Right cardiac atrium (tissue), 5 donors: ENCODE measurements at regions of chr1 and their contacts with region 1.

Region 1: DNA sequence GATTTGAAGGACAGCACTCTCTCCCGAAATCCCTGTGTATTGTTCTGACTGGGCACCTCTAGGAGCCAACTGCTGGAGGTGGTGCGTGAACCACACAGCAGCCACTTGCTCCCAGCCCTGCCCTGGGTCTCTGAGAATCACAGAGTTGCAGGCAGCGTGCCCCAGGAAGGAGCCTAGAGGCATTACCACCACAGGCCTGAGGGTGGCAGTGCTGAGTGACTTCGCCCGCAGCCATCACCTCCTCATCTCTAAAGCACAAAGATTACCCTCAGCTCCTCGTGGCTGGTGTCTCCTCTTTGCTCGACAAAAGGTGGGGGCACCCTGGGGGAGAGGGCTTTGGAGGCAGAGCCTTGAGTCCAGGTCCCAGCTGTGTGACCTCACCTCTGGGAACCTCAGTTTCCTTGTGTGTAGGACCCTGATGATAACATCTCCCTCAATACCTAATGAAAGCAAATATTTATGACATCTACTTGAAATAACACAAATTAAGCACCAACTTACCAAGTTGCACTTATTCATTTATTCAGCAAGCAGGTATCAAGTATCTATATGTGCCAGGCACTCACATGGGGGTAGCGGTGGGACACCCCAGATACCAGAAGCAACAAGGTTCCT is 86.3 kb downstream of the VWA5B1 start:
- DNase-seq: peak in 1 of 3 donors; percentile 70
- ATAC-seq: peak in 1 of 2 donors; percentile 66
- H3K4me3 ChIP-seq: no peak overlapping the region
- H3K27ac ChIP-seq: no peak overlapping the region
- H3K4me1 ChIP-seq: no peaks in the 10 kb centered on the region
- H3K27me3 ChIP-seq: no peaks in the 10 kb centered on the region

Region 2: GRCh38 chr1:20199403-20199802 is 177.6 kb before region 1 on chr1:
- intact Hi-C with region 1: no loop called
- DNase-seq: no peak
- ATAC-seq: no peak
- H3K4me3 ChIP-seq: no peak overlapping the region
- H3K27ac ChIP-seq: no peak overlapping the region
- H3K4me1 ChIP-seq: peaks cover 4% of the 10 kb centered on the region
- H3K27me3 ChIP-seq: no peaks in the 10 kb centered on the region

Region 3: DNA sequence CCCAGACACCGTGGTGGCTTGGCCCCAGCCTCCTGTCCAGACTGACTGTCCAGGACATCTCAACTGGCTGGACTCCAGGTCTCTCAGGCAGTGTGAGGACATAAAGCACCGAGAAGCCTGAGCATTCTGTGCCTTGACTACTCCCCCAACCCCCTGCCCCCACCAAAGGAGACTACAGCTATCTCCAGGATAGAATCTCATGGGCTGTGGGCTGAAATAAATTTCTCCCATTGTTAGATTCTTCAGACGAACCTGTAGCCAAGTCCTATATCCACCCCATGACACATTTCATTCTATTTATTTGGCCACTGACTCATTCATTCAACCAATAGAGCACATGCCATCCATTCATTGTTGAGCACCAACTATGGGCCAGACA is 74.9 kb before region 1 on chr1:
- intact Hi-C with region 1: no loop called
- DNase-seq: peak; percentile 56 to 84 (median 81)
- ATAC-seq: peak; percentile 79 to 87
- H3K4me3 ChIP-seq: no peak overlapping the region
- H3K27ac ChIP-seq: no peak overlapping the region
- H3K4me1 ChIP-seq: peaks cover 2% of the 10 kb centered on the region
- H3K27me3 ChIP-seq: no peaks in the 10 kb centered on the region

Region 4: DNA sequence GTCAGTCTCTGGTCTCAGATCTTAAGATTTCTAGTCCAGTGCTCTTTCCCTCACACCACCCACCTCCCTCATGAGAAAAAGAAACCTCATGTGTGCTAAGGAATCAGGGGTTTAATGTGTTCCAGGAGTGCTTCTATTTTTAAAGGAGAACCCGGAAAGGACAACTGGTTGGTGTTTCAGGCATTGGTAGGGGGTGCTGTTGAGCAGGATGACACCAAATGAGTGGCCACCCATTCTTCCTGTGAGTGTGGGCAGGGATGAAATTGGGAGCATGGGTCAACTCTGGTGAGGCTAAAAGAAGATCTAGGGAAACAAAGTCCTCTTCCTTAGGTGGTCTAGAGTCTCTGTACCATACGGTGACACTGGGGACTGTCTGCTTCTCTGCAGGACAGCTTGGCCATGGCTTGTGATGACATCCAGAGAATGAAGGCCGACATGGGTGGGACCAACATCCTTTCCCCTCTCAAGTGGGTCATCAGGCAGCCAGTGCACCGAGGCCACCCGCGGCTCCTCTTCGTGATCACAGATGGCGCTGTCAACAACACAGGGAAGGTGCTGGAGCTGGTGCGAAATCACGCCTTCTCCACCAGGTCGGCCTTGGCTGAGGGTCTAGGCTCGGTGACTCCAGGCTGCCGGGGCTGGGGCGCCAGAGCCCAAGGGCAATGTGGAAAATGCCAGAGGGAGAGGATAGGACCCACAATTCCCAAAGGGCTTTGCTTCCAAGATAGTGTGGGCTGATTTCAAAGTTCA is 47.0 kb before region 1 on chr1:
- intact Hi-C with region 1: no loop called
- DNase-seq: peak in 1 of 3 donors; percentile 20
- ATAC-seq: no peak
- H3K4me3 ChIP-seq: no peak overlapping the region
- H3K27ac ChIP-seq: no peak overlapping the region
- H3K4me1 ChIP-seq: no peaks in the 10 kb centered on the region
- H3K27me3 ChIP-seq: no peaks in the 10 kb centered on the region

Region 5: GRCh38 chr1:20485527-20486456 is 108.8 kb after region 1 on chr1 and contains the start of gene CAMK2N1:
- intact Hi-C with region 1: loop called in 3 of 4 experiments (anchors 5 to 10 kb)
- DNase-seq: peak; percentile 73 to 92 (median 92)
- ATAC-seq: peak; percentile 87
- H3K4me3 ChIP-seq: peak within 1 kb of the TSS; percentile 64
- H3K27ac ChIP-seq: peak within 1 kb of the TSS; percentile 22
- H3K4me1 ChIP-seq: no peaks in the 10 kb centered on the region
- H3K27me3 ChIP-seq: no peaks in the 10 kb centered on the region
- total RNA-seq, gene CAMK2N1: 15.6 to 28.5 (median 15.8) TPM

Region 6: DNA sequence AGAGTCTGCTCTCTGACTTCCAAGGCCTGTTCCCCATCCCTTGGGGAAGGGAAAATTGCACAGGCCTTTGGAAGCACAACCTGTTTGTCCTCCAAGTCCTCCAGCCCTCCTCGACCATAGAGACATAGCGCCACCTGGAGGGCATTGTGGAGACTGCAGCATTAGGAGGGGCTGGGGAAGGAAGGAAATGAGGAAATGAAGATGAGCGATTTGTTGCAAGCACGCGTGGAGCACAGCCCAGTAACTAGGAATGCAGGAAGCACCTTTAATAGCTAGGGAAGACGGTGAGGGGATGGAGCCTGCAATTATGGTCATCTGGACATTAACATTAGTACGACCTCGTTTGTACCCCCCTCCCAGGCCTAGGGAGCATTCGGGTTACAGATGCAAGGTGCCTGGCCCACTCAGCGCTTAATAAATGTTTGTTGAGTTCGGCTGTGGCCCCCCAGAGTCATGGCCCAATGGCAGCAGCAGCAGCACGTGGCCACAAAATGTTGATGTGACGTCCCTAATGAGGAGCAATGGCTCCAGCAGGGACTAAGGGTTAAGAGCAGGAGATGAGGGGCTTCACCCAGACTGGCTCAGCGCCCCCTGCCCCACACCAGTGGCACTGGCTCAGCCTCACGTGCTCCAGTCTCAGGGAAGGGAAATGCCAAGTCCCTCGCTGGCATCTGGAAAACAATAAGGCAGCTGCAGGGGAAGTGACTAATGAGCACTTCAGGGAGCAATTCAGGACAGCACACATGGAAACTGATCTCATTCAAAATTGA is 117.0 kb after region 1 on chr1:
- intact Hi-C with region 1: loop called in 3 of 4 experiments (anchors 5 to 10 kb)
- DNase-seq: peak; percentile 80 to 94 (median 91)
- ATAC-seq: peak; percentile 82 to 88
- H3K4me3 ChIP-seq: no peak overlapping the region
- H3K27ac ChIP-seq: no peak overlapping the region
- H3K4me1 ChIP-seq: no peaks in the 10 kb centered on the region
- H3K27me3 ChIP-seq: no peaks in the 10 kb centered on the region